H1 (cell line): ENCODE measurements at regions of chr11 and their contacts with region 1.

Region 1: GRCh38 chr11:35822815-35823495 is 120.9 kb upstream of the LDLRAD3 start:
- DNase-seq: no peak
- H3K4me3 ChIP-seq: no peak overlapping the region
- H3K27ac ChIP-seq: no peak overlapping the region
- H3K4me1 ChIP-seq: peaks cover 0 to 2% (median 0%) of the 10 kb centered on the region in 4 experiments; a peak in 1 of 7 replicates
- H3K27me3 ChIP-seq: peaks cover 0 to 2% (median 0%) of the 10 kb centered on the region in 4 experiments; a peak in 1 of 7 replicates
- CTCF ChIP-seq: no peak
- EP300 ChIP-seq: no peak
- POLR2A ChIP-seq: no peak
- RAD21 ChIP-seq: no peak

Region 2: DNA sequence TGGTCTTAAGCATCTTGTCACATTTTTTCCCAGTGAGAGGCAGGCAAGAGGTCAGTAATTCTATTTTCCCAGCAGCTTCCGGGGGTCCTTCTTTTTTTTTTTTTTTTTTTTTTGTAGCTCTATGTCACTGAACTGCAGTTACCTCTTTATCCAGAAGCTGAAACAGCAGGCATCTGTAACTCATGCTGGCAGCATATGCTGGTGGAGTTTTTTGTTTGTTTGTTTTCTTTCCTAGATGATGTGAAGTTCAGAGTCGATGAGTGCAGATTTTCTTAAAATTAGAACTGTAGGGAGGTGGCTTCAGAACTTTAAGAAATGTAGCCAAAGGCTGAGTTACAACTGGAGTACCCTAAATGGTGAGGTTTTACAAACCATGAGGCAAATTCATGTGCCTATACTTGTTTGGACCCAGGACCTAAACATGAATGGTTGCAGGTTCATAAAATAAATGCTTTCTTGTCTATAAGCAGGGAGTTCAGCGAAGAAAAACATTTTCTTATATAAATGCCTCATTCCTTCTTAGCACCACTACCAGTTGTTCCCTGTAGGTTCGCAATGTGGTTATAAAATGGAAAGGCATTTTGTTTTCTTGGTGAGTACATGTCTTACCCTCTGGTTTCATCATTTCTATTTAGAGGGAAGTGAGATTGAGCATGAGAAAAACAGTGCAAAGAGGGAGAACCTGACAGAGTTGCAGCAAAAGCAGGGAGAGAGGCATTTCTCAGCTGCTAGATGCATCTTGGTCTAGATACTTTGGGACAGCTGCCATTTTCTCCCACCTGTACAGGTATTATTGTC is 76.4 kb before region 1 on chr11:
- CTCF ChIA-PET with region 1: interaction called, 14 read pairs
- POLR2A ChIA-PET with region 1: no interaction called
- DNase-seq: no peak
- H3K4me3 ChIP-seq: no peak overlapping the region
- H3K27ac ChIP-seq: no peak overlapping the region
- H3K4me1 ChIP-seq: no peaks in the 10 kb centered on the region
- H3K27me3 ChIP-seq: no peaks in the 10 kb centered on the region
- CTCF ChIP-seq: no peak
- EP300 ChIP-seq: no peak
- POLR2A ChIP-seq: no peak
- RAD21 ChIP-seq: no peak

Region 3: DNA sequence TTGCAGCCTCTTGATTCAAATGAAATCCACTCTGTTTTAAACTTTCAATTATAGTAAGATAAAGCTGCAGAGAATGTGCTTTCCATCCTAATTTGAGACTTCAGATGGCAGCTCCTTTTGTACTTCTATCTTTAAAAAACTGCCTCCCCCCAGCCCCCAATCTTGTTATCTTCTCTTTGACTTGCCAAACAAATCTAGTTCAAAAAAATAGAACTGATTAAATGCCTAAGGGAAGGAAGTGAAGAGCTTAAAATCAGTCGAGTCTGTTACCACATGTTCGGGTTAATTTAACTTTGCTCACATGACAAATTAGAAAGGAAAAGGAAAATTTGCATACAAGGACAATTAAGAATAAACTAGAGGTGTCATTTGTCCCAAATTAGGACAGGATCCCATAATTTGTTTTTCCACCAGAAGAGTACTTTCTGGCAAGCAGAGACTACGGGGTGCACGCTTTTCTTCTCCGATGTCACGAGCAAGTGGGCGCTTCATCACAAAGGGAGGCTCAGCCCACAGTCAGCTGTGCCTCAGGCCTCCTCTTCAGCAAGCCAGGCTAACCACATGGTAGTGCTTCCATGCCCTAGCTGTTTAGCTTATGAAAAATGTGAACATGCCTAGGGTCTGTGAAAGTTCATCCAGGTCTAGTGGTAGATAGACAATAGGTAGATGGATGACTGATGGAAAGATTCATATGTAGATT is 51.9 kb after region 1 on chr11:
- CTCF ChIA-PET with region 1: interaction called, 12 read pairs
- POLR2A ChIA-PET with region 1: no interaction called
- DNase-seq: peak in 1 of 2 experiments; percentile 17
- H3K4me3 ChIP-seq: no peak overlapping the region
- H3K27ac ChIP-seq: no peak overlapping the region
- H3K4me1 ChIP-seq: no peaks in the 10 kb centered on the region
- H3K27me3 ChIP-seq: no peaks in the 10 kb centered on the region
- CTCF ChIP-seq: no peak
- EP300 ChIP-seq: no peak
- POLR2A ChIP-seq: no peak
- RAD21 ChIP-seq: no peak

Region 4: DNA sequence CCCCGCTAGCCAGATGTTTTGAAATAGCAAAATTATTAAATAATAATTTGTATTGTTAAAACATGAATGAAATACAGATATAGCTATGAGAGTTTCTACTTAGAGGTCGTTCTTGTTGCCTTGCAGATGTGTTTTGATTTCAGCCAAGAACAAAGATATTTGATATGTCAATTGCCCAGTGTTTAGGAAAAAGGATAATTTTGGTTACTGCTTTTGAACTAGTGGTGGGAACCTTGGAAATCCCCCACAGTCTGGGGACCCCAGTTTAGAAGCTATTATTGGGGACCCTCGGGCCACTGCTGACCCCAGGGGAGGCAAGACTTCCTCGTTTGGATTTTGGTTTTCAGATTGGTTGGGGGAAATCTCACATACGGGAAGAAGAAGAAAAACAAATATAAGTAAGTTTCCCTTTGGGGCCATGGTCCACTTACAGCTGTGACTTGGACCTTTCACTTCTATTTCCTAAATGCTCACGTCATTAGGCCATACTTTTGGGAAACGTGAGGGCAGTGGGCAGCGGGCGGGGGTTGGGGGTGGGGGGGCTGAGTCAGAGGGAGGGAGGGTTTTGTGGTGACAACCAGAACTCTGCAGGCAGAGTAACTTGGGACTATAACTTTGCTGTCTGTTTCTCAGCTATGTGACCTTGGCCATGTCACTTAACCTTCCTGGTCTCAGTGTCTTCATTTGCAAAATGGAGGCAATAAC is 157.9 kb after region 1 on chr11:
- CTCF ChIA-PET with region 1: interaction called, 15 read pairs
- POLR2A ChIA-PET with region 1: no interaction called
- DNase-seq: no peak
- H3K4me3 ChIP-seq: no peak overlapping the region
- H3K27ac ChIP-seq: no peak overlapping the region
- H3K4me1 ChIP-seq: peaks cover 8 to 26% (median 13%) of the 10 kb centered on the region in 4 experiments
- H3K27me3 ChIP-seq: no peaks in the 10 kb centered on the region
- CTCF ChIP-seq: no peak
- EP300 ChIP-seq: no peak
- POLR2A ChIP-seq: no peak
- RAD21 ChIP-seq: no peak

Region 5: GRCh38 chr11:36056160-36056751 is 233.3 kb after region 1 on chr11:
- CTCF ChIA-PET with region 1: interaction called, 42 read pairs
- POLR2A ChIA-PET with region 1: interaction called, 3 read pairs
- DNase-seq: peak in 1 of 2 experiments; percentile 74
- H3K4me3 ChIP-seq: no peak overlapping the region
- H3K27ac ChIP-seq: no peak overlapping the region
- H3K4me1 ChIP-seq: peaks cover 0 to 14% (median 4%) of the 10 kb centered on the region in 4 experiments; a peak in 3 of 7 replicates
- H3K27me3 ChIP-seq: no peaks in the 10 kb centered on the region
- CTCF ChIP-seq: peak; percentile 85 to 94 (median 88)
- EP300 ChIP-seq: no peak
- POLR2A ChIP-seq: no peak
- RAD21 ChIP-seq: peak; percentile 85 to 89

Region 6: DNA sequence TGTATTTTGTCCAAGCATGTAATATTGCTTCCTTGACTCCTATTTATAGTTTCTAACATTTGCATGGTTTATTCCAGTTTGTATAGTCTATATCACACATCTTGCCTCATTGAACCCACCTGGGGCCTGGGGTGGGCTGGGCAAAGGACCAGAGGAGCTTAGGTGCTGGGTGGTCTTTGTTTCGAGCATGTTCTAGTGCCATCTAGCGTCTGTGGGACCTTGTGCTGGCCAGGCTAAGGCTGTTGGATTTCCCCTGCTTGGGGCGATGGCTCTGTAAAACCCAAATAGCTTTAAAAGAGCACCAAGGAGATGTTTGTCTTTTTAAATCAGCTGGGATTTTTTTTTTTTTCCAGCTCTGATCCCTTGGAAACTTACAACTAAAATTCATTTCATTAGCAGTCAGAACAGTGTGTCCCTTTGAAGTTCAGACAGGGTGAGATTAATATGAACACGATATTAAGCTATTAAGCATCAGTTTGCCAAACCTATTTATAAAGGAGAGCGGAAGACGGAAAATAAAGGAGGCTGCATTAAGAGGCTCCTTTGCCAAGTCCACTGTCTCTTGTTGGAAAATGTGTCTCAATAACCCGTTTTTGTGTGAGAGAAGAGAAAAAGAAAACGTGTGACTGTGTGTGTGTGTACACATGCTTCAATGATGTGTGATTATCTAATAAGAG is 308.9 kb after region 1 on chr11:
- CTCF ChIA-PET with region 1: interaction called, 28 read pairs
- POLR2A ChIA-PET with region 1: interaction called, 3 read pairs
- DNase-seq: peak in 1 of 2 experiments; percentile 66
- H3K4me3 ChIP-seq: no peak overlapping the region
- H3K27ac ChIP-seq: no peak overlapping the region
- H3K4me1 ChIP-seq: peaks cover 1 to 7% (median 5%) of the 10 kb centered on the region in 4 experiments; a peak in 4 of 7 replicates
- H3K27me3 ChIP-seq: no peaks in the 10 kb centered on the region
- CTCF ChIP-seq: peak; percentile 79 to 87 (median 84)
- EP300 ChIP-seq: no peak
- POLR2A ChIP-seq: no peak
- RAD21 ChIP-seq: peak; percentile 89 to 93